Heart right ventricle (tissue), 16 donors: ENCODE measurements at regions of chr7 and their contacts with region 1.

Region 1: DNA sequence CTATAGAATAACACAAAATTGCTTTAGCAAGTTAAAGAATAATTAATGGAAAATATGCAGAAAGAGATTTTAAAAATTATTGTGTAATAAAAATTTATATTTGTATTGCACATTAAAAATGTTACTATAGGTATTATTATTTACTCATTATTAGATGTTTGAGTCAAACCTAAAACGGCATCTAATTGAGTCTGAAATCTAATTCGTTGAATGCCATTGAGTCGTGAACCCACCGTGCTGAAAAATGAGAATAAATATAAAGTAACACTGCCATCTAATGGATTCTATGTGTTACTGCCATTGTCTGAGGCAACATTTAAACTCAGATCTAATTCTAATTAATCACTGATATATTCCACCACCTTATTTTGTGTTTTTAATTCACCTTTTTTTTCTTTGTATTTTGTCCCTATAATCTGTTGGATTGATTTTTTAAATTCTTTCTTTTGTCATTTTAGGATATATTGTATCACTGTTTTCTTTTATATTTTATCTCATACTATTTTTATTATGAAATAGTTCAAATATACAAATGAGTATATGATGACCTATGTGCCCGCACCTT is 62.2 kb downstream of the SAMD9 start:
- DNase-seq: no peak
- ATAC-seq: peak in 4 of 8 donors; percentile 33 to 58 (median 46)
- H3K4me3 ChIP-seq: no peak overlapping the region
- H3K27ac ChIP-seq: no peak overlapping the region
- H3K4me1 ChIP-seq: peaks cover 0 to 14% (median 0%) of the 10 kb centered on the region in 9 donors
- H3K27me3 ChIP-seq: peaks cover 0 to 3% (median 0%) of the 10 kb centered on the region in 7 donors
- CTCF ChIP-seq: peak; percentile 56 to 90 (median 80)

Region 2: GRCh38 chr7:92421676-92422435 is 633.8 kb before region 1 on chr7:
- intact Hi-C with region 1: loop called in 3 of 10 experiments (anchors 10 kb)
- DNase-seq: no peak
- ATAC-seq: no peak
- H3K4me3 ChIP-seq: no peak overlapping the region
- H3K27ac ChIP-seq: no peak overlapping the region
- H3K4me1 ChIP-seq: peaks cover 0 to 13% (median 0%) of the 10 kb centered on the region in 9 donors
- H3K27me3 ChIP-seq: peaks cover 0 to 17% (median 15%) of the 10 kb centered on the region in 7 donors
- CTCF ChIP-seq: no peak

Region 3: GRCh38 chr7:92682903-92683539 is 372.6 kb before region 1 on chr7:
- intact Hi-C with region 1: loop called in 1 of 10 experiments (anchors 10 kb)
- DNase-seq: no peak
- ATAC-seq: no peak
- H3K4me3 ChIP-seq: no peak overlapping the region
- H3K27ac ChIP-seq: peak overlapping the region in 2 of 10 donors; percentile 16 to 18
- H3K4me1 ChIP-seq: peaks cover 0 to 41% (median 19%) of the 10 kb centered on the region in 9 donors
- H3K27me3 ChIP-seq: no peaks in the 10 kb centered on the region
- CTCF ChIP-seq: no peak

Region 4: DNA sequence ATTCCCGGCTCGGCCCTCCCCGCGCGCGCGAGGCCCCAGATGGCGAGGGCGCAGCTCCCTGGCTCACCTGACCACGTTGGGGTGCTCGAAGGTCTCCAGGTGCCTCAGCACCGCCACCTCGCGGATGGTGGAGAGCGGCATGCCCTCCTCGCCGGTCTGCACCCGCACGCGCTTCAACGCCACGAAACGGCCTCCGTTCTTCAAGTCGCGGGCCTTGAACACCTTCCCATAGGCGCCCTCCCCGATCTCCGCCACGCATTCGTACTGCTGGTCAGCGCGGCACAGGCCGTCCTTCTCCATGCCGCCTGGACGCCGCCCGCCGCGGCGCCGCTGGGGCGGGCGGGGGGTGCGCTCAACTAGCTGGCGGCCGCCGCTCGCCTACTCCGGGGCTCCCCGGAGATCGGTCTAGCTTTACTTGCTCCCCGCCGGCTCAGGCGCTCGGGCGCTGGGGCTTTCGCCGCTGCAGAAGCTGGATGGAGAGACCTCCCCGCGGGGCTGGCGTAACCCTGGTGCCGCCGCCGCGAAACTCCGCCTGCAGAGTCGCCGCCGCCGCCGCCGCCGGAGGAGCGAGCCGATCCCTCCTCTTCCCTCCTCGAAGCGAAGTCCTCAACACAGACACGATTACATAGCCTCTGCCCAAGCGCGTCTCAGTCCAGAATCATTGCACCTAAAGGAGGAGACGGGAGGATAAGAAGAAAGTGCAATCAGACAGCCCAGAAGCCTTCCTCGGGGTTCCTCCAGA is 222.4 kb before region 1 on chr7:
- intact Hi-C with region 1: loop called in 1 of 10 experiments (anchors 5 kb)
- DNase-seq: peak; percentile 85 to 87
- ATAC-seq: peak; percentile 73 to 91 (median 80)
- H3K4me3 ChIP-seq: peak overlapping the region; percentile 71 to 95 (median 88)
- H3K27ac ChIP-seq: peak overlapping the region; percentile 86 to 98 (median 92)
- H3K4me1 ChIP-seq: peaks cover 0 to 51% (median 47%) of the 10 kb centered on the region in 9 donors
- H3K27me3 ChIP-seq: no peaks in the 10 kb centered on the region
- CTCF ChIP-seq: peak; percentile 74 to 90 (median 89)

Region 5: GRCh38 chr7:92973974-92974373 is 81.7 kb before region 1 on chr7:
- intact Hi-C with region 1: loop called in 1 of 10 experiments (anchors 10 kb)
- DNase-seq: no peak
- ATAC-seq: no peak
- H3K4me3 ChIP-seq: no peak overlapping the region
- H3K27ac ChIP-seq: no peak overlapping the region
- H3K4me1 ChIP-seq: no peaks in the 10 kb centered on the region
- H3K27me3 ChIP-seq: no peaks in the 10 kb centered on the region
- CTCF ChIP-seq: no peak